Activated B cell treated with CpG ODN at 0.5 μM for 24 hours (primary cell): ENCODE measurements at regions of chr1 and their contacts with region 1.

Region 1: GRCh38 chr1:181021811-181022434 is 747 bp downstream of the STX6 start:
- DNase-seq: no peak
- ATAC-seq: peak; percentile 37
- H3K4me3 Mint-ChIP-seq: peak overlapping the region; percentile 96
- H3K27ac Mint-ChIP-seq: peak overlapping the region; percentile 94
- H3K4me1 Mint-ChIP-seq: peaks cover 40% of the 10 kb centered on the region
- H3K27me3 Mint-ChIP-seq: no peaks in the 10 kb centered on the region
- CTCF ChIP-seq: no peak

Region 2: GRCh38 chr1:179954493-179955297 is 1067.2 kb before region 1 on chr1 and contains the start of gene CEP350:
- CTCF ChIA-PET with region 1: no interaction called
- POLR2A ChIA-PET with region 1: interaction called, 3 read pairs
- intact Hi-C with region 1: loop called (anchors 5 kb)
- DNase-seq: peak; percentile 91
- ATAC-seq: peak; percentile 90
- H3K4me3 Mint-ChIP-seq: peak within 1 kb of the TSS; percentile 81
- H3K27ac Mint-ChIP-seq: peak within 1 kb of the TSS; percentile 90
- H3K4me1 Mint-ChIP-seq: peaks cover 57% of the 10 kb centered on the region
- H3K27me3 Mint-ChIP-seq: no peaks in the 10 kb centered on the region
- CTCF ChIP-seq: no peak
- total RNA-seq, gene CEP350: 60.8 and 63.9 TPM in 2 replicates

Region 3: GRCh38 chr1:180502360-180503273 is 519.3 kb before region 1 on chr1 and contains the start of gene ACBD6:
- CTCF ChIA-PET with region 1: no interaction called
- POLR2A ChIA-PET with region 1: interaction called, 15 read pairs
- intact Hi-C with region 1: loop called (anchors 2 kb)
- DNase-seq: peak; percentile 82
- ATAC-seq: peak; percentile 83
- H3K4me3 Mint-ChIP-seq: peak within 1 kb of the TSS; percentile 96
- H3K27ac Mint-ChIP-seq: peak within 1 kb of the TSS; percentile 98
- H3K4me1 Mint-ChIP-seq: peaks cover 30% of the 10 kb centered on the region
- H3K27me3 Mint-ChIP-seq: no peaks in the 10 kb centered on the region
- CTCF ChIP-seq: no peak
- total RNA-seq, gene ACBD6: 55.4 and 61.5 TPM in 2 replicates

Region 4: DNA sequence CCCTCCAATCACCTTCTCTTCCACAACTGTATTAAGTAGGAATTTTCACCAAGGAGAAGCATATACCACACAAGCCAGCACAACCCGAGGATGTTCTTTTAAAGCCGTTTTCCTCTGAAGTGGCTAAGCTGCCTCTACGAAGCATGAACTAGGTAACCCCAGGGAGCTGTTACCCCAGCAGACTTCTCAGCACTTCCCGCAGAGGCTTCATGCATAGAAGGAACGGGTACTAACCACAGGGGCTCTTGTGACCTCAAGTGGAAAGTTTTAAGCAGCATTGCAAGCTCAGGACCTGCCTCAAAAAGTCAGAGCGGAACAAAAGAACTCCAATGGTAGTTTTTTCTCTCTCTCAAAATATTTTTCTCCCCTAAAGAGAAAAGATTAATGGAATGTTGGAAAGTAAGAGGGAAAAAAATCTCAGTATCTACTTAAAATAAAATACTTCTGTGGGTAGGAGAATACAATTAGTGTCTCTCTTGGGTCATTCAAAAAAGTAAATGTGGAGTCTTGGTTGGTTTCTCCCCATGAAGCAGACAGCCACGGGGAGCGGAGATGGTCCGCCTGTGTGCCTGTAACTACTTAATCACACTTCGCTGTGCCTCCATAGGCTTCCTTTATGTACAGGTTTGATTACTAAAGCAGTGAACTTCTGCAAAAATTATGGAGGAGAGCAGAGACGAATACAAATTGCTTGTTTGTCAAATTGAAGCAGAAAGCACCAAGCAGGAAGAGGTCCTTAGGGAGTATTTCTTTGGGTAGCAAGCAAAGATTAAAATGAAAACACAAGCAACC is 40.1 kb before region 1 on chr1:
- CTCF ChIA-PET with region 1: no interaction called
- POLR2A ChIA-PET with region 1: no interaction called
- intact Hi-C with region 1: loop called (anchors 5 kb)
- DNase-seq: no peak
- ATAC-seq: peak; percentile 93
- H3K4me3 Mint-ChIP-seq: no peak overlapping the region
- H3K27ac Mint-ChIP-seq: peak overlapping the region; percentile 64
- H3K4me1 Mint-ChIP-seq: peaks cover 15% of the 10 kb centered on the region
- H3K27me3 Mint-ChIP-seq: no peaks in the 10 kb centered on the region
- CTCF ChIP-seq: no peak

Region 5: DNA sequence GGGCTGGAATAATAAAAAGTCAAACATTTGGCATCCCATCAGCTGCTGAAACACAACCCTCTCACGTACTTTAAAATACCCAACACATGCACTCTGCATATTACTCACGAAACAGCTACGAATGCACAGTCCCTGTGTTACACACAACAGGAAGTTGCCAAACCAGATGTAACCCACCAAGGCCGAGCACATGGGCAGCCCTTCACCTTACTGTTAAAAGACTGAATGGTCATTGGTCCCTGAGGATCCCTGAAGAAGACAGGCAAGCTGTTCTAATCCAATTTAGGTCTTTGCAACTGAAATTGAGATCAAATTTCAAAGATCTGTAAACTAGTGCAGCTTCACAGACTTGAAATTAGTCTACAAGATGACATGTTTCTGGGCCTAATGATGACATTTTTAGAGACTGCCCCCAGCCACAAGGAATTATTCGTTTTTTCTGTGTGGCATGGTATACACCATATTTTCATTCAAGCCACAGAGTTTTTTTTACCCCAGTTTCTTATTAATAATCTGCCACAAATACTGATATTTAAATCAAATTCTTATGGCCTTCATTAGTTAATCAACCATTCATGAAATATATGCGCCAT is 41.0 kb after region 1 on chr1:
- CTCF ChIA-PET with region 1: no interaction called
- POLR2A ChIA-PET with region 1: interaction called, 29 read pairs
- intact Hi-C with region 1: loop called (anchors 1 kb)
- DNase-seq: no peak
- ATAC-seq: peak; percentile 69
- H3K4me3 Mint-ChIP-seq: peak overlapping the region; percentile 79
- H3K27ac Mint-ChIP-seq: peak overlapping the region; percentile 92
- H3K4me1 Mint-ChIP-seq: peaks cover 34% of the 10 kb centered on the region
- H3K27me3 Mint-ChIP-seq: no peaks in the 10 kb centered on the region
- CTCF ChIP-seq: no peak

Region 6: GRCh38 chr1:182029379-182030331 is 1007.7 kb after region 1 on chr1:
- CTCF ChIA-PET with region 1: no interaction called
- POLR2A ChIA-PET with region 1: interaction called, 10 read pairs
- intact Hi-C with region 1: no loop called
- DNase-seq: peak; percentile 98
- ATAC-seq: peak; percentile 94
- H3K4me3 Mint-ChIP-seq: peak overlapping the region; percentile 97
- H3K27ac Mint-ChIP-seq: peak overlapping the region; percentile 97
- H3K4me1 Mint-ChIP-seq: peaks cover 15% of the 10 kb centered on the region
- H3K27me3 Mint-ChIP-seq: no peaks in the 10 kb centered on the region
- CTCF ChIP-seq: no peak